Gastrocnemius medialis (tissue), 4 donors: ENCODE measurements at regions of chr22 and their contacts with region 1.

Region 1: DNA sequence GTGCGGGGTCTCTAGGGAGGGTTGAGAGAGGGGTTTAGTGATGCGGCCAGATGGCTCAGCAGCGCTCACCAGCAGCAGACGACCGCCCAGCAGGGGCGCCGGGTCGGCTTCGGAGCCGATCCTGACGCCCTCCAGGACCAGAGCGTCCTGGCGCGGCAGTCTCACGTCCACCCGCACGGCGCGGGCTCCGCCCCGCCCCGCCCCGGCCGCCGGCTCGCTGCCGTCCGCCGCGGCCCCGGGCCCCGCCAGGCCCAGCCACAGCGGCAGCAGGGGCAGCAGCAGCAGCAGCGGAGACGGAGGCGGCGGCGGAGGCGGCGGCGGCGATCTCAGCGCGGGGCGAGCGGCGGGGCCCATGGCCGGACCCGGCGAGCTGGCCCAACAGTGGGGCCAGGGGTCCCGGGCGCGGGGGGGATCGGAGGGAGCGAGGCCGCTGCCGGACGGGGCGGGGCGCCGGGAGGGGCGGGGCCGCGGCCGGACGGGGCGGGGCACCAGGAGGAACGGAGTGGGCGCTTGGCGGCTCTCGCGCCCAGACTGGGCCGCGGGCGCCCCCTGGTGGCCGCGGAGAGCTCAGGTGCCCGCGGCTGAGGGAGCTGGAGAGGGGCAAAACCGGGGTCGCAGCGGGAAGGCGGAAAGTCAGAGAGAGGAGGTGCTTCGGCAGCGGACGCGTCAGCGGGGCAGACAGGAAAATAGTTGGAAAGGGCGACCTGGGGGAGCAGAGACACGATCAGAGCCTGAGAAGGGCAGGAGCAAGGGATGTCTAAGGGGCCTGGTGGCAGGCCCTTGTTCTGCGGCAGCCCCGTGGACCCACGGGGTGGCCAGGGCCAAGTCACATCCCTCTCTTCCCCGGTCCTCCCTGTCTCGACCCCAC is at the start of gene RNF215:
- DNase-seq: peak; percentile 50 to 66
- ATAC-seq: peak; percentile 93 to 95
- H3K4me3 ChIP-seq: peak within 1 kb of the TSS; percentile 62 to 73 (median 66)
- H3K27ac ChIP-seq: peak within 1 kb of the TSS; percentile 58 to 71 (median 64)
- H3K4me1 ChIP-seq: peaks cover 7% of the 10 kb centered on the region in 2 donors
- H3K27me3 ChIP-seq: no peaks in the 10 kb centered on the region
- CTCF ChIP-seq: peak; percentile 86 to 98 (median 97)
- POLR2A ChIP-seq: no peak
- total RNA-seq, gene RNF215: 4.7 to 11.2 (median 8.1) TPM

Region 2: DNA sequence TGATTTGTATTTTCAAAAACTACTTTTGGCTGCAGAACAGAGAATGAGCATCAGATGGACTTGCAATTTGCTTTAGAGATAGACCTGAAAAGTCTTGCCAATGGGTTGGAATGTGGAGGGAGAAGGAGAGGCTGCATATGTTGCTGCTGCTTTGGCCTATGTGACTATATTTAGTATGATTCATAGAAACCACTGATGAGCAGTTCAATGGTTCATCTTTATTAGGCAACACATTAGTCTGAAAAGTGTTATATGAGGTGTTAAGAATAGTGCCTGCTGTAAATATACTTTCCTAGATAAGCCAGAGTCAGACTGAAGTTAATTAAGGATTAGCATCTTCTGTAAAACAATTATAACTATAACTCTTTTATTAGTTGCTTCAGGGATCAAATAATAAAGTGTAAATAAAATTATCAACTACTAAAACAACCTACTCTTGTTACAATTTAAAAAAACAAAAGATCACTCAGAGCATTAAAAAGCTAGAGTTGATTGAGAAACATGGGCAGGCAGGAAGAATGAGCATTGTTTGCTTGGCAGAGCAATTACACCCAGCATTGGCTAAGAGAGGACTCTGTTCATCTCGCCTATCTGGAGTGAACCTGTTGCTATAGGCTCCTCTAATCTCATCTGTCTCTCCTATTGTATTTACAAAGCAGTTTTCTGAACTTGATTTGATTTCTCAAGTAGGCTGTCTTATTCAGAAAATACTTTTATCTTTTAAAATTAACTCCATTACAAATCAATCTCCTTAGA is 270.7 kb before region 1 on chr22:
- in situ Hi-C with region 1: loop called (anchors 25 kb)
- intact Hi-C with region 1: no loop called
- DNase-seq: no peak
- ATAC-seq: no peak
- H3K4me3 ChIP-seq: no peak overlapping the region
- H3K27ac ChIP-seq: no peak overlapping the region
- H3K4me1 ChIP-seq: no peaks in the 10 kb centered on the region
- H3K27me3 ChIP-seq: no peaks in the 10 kb centered on the region
- CTCF ChIP-seq: no peak
- POLR2A ChIP-seq: no peak

Region 3: GRCh38 chr22:30282616-30283081 is 104.5 kb before region 1 on chr22:
- in situ Hi-C with region 1: loop called in 3 of 4 experiments (anchors 5 to 10 kb)
- intact Hi-C with region 1: loop called (anchors 1 kb)
- DNase-seq: no peak
- ATAC-seq: no peak
- H3K4me3 ChIP-seq: no peak overlapping the region
- H3K27ac ChIP-seq: no peak overlapping the region
- H3K4me1 ChIP-seq: peaks cover 0 to under 1% of the 10 kb centered on the region in 2 donors
- H3K27me3 ChIP-seq: no peaks in the 10 kb centered on the region
- CTCF ChIP-seq: no peak
- POLR2A ChIP-seq: no peak

Region 4: GRCh38 chr22:30326706-30327362 is 60.4 kb before region 1 on chr22 and contains the start of gene TBC1D10A:
- in situ Hi-C with region 1: no loop called
- intact Hi-C with region 1: loop called (anchors 5 kb)
- DNase-seq: peak; percentile 73 to 88
- ATAC-seq: peak; percentile 84 to 92
- H3K4me3 ChIP-seq: peak within 1 kb of the TSS; percentile 83 to 99 (median 87)
- H3K27ac ChIP-seq: peak within 1 kb of the TSS; percentile 81 to 84 (median 82)
- H3K4me1 ChIP-seq: peaks cover 21 to 30% of the 10 kb centered on the region in 2 donors
- H3K27me3 ChIP-seq: no peaks in the 10 kb centered on the region
- CTCF ChIP-seq: no peak
- POLR2A ChIP-seq: peak; percentile 75 to 84
- total RNA-seq, gene TBC1D10A: 4.1 to 9.6 (median 6.2) TPM

Region 5: DNA sequence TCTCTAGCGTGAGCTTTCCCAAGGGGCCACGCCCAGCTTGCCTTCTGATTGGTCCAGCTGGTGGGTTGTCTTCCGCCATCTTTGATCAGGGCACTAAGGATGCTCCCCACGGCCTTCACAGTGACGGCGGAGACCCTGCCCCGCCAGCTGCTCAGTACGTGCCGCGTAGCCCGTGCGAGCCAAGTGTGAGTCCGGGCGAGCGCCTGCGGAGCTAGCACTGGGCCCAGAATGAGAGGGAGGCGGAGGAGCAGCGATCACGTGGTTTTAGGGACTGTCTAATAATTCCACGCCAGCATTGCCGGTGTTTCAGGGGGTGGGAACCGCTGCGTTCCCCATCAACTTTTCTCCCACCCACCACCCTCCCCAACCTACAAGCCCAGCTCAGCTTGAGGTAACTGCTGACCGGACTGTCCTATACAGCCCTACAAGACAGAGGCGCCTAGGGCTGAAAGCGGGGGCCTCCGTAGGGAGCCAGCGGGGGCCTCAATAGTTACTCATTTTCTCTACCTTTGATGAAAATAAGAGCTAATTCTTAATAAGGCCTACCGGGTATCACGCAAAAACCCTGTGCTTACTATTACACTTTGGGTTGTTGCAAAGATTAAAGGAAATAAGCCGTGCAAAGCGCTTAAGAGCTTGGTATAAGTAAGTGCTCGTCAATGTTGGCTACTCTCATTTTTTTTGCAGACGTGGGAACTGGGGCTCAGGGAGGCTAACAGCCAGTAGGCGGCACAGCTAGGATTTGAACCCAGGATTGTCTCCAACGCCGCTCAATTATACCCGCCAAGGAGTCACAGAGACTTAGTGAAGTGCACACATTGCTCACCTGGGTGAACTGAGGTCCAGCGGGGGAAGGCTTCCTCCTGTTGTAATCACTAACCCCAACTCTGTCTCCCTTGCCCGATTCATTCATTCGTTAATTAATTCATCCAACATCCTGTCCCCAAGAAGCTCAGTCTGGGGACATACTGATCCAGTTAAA is 37.1 kb after region 1 on chr22:
- in situ Hi-C with region 1: no loop called
- intact Hi-C with region 1: loop called (anchors 1 kb)
- DNase-seq: peak; percentile 99
- ATAC-seq: peak; percentile 80 to 89
- H3K4me3 ChIP-seq: peak overlapping the region; percentile 60 to 96 (median 78)
- H3K27ac ChIP-seq: peak overlapping the region; percentile 92 to 100 (median 99)
- H3K4me1 ChIP-seq: peaks cover 31 to 32% of the 10 kb centered on the region in 2 donors
- H3K27me3 ChIP-seq: no peaks in the 10 kb centered on the region
- CTCF ChIP-seq: no peak
- POLR2A ChIP-seq: peak in 1 of 2 donors; percentile 73

Region 6: DNA sequence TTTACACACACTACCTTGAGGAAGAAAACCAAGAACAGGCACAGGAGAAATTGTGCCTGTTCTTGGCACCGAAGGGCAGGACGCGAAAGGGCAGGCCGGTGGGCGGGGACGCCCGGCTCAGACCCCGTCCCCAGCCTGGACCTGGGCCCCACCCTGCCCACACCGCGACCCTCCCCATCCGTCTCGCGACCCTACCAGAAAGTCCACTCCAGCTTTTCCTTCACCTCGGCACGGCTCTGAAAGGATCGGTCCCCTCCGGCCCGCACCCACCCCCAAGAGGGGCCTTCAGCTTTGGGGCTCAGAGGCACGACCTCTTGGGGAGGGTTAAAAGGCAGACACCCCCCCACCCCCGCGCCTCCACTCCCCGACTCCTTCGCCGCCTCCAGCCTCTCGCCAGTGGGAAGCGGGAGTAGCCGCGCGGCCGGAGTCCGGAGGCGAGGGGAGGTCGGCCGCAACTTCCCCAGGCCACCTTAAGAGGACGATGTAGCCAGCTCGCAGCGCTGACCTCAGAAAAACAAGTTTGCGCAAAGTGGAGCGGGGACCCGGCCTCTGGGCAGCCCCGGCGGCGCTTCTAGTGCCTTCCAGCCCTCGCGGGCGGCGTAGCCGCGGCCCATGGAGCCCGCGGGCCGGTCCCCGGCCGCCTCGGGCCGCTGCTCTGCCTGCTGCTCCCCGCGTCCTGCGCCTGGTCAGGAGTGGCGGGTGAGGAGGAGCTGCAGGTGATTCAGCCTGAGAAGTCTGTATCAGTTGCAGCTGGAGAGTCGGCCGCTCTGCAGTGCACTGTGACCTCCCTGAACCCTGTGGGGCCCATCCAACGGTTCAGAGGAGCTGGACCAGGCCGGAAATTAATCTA is 155.0 kb after region 1 on chr22:
- in situ Hi-C with region 1: no loop called
- intact Hi-C with region 1: no loop called
- DNase-seq: no peak
- ATAC-seq: no peak
- H3K4me3 ChIP-seq: peak overlapping the region; percentile 24 to 49 (median 41)
- H3K27ac ChIP-seq: no peak overlapping the region
- H3K4me1 ChIP-seq: no peaks in the 10 kb centered on the region
- H3K27me3 ChIP-seq: peaks cover 25% of the 10 kb centered on the region in 3 donors
- CTCF ChIP-seq: no peak
- POLR2A ChIP-seq: no peak